ENCODE measurements at regions of chr15 and their contacts with region 1.

Region 1: DNA sequence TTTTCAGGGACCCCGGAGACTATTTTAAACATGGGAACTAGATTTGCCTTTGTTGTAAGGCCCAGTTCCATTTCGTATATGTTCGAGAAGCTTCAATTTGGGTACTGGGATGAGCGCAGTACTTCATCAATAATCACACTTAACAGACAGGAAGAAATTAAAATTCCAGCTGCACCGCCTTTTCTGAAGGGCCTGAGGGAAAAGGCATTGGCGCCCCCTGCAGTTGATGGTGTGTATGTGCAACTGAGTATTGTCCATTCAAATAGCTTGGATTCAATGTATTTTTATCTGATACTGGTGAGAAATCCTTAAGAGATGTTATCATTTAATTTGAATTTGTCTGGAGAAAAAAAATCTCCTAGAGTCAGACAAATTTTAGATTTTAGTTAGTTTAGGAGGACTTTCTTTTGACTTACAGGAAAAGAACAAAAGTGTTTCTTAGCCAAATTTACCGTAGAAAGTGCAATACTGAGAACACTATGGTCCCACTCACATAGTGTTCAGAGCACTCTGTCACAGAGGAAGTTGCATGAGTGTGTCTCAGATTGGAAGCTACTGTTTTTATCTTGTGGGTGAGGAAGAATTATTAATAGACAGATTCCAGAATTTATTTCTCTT is 5.4 kb upstream of the ALDH1A2 start:
- DNase-seq: no peak
- ATAC-seq: peak; percentile 48; the same call in 2 of the 3 replicates
- H3K4me3 ChIP-seq: no peak overlapping the region
- H3K27ac ChIP-seq: no peak overlapping the region
- H3K4me1 ChIP-seq: no peaks in the 10 kb centered on the region
- H3K27me3 ChIP-seq: peaks cover 2 to 5% of the 10 kb centered on the region in 2 experiments; a peak in 3 of 4 replicates
- CTCF ChIP-seq: peak; percentile 59 to 86 (median 80)
- EP300 ChIP-seq: no peak
- POLR2A ChIP-seq: no peak
- RAD21 ChIP-seq: peak; percentile 68

Region 2: DNA sequence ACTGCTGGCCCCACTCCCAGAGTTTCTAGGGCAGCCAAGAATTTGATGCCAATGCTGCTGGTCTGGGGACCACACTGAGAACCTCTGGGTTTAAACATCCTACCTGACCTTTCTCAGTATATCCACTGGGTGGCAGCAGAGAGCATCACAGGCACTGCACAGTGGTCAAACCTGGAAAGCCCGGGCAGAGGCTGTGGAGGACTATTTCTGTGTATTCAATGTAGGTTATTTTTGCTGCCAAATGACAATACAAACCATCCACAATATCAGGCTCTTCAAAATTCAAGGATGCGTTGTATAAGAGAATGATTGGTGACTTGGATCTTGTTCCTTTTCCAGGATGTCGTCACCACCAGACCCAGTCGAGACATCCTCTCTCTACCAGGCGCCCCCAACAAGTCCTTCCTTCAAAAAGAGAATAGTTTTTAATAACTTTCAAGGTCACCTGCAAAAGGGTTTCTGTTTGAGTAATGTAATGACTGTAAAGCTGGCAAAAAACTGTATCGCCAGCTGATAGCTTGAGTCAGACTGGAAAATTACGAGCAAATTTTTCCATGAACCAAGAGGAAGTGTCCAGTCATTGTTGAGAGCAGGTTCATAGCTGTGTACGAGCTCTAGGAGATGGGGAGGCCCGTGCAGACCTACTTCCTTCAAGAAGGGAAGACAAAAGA is 509.7 kb before region 1 on chr15:
- CTCF ChIA-PET with region 1: interaction called, 14 read pairs
- POLR2A ChIA-PET with region 1: no interaction called
- RAD21 ChIA-PET with region 1: no interaction called
- SMC1A ChIA-PET with region 1: no interaction called
- in situ Hi-C with region 1: no loop called
- intact Hi-C with region 1: loop called (anchors 10 kb)
- DNase-seq: peak; percentile 26
- ATAC-seq: peak; percentile 95
- H3K4me3 ChIP-seq: no peak overlapping the region
- H3K27ac ChIP-seq: no peak overlapping the region
- H3K4me1 ChIP-seq: peaks cover 3% of the 10 kb centered on the region; the same call in 1 of the 2 replicates
- H3K27me3 ChIP-seq: no peaks in the 10 kb centered on the region
- CTCF ChIP-seq: peak; percentile 82 to 86 (median 83)
- EP300 ChIP-seq: no peak
- POLR2A ChIP-seq: no peak
- RAD21 ChIP-seq: peak; percentile 66

Region 3: GRCh38 chr15:57743424-57743823 is 327.5 kb before region 1 on chr15:
- CTCF ChIA-PET with region 1: interaction called, 7 read pairs
- POLR2A ChIA-PET with region 1: no interaction called
- RAD21 ChIA-PET with region 1: interaction called, 9 read pairs
- SMC1A ChIA-PET with region 1: interaction called, 3 read pairs
- in situ Hi-C with region 1: no loop called
- intact Hi-C with region 1: loop called (anchors 10 kb)
- DNase-seq: no peak
- ATAC-seq: peak; percentile 43; the same call in 1 of the 3 replicates
- H3K4me3 ChIP-seq: no peak overlapping the region
- H3K27ac ChIP-seq: no peak overlapping the region
- H3K4me1 ChIP-seq: no peaks in the 10 kb centered on the region
- H3K27me3 ChIP-seq: no peaks in the 10 kb centered on the region; a peak in 1 of 4 replicates
- CTCF ChIP-seq: peak; percentile 6 to 32 (median 23); a peak in 3 of 6 replicates
- EP300 ChIP-seq: no peak
- POLR2A ChIP-seq: no peak
- RAD21 ChIP-seq: peak; percentile 8; the same call in 1 of the 2 replicates

Region 4: DNA sequence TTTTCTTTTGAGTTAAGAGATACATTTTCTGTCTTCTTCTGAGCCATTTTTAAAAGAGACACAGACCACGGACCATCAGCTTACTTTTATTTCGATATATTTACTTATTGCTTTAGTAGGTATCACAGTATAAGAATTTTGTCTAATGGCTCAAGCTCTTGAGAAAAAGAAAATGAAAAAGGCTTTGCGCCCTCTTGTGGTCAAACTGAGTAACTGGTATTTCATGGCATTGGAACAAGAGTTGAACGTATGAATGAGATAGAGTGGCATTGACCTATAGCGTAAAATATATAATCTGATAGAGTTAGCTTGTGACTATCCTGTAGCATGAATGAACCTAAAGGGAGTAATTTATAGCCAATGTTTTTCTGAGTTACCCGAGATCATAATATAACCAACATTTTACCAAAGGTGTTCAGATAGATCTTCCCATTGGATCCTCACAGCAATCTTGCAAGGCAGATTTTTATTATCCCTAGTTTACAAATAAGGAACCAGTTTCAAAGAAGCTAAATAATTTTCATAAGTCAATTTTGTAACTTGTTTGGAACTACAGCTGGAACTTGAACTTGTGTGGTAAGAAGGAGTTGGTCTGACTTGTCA is 209.8 kb before region 1 on chr15:
- CTCF ChIA-PET with region 1: interaction called, 27 read pairs
- POLR2A ChIA-PET with region 1: no interaction called
- RAD21 ChIA-PET with region 1: interaction called, 14 read pairs
- SMC1A ChIA-PET with region 1: interaction called, 6 read pairs
- in situ Hi-C with region 1: loop called (anchors 5 kb)
- intact Hi-C with region 1: loop called (anchors 1 kb)
- DNase-seq: peak; percentile 8
- ATAC-seq: peak; percentile 69
- H3K4me3 ChIP-seq: no peak overlapping the region
- H3K27ac ChIP-seq: no peak overlapping the region
- H3K4me1 ChIP-seq: no peaks in the 10 kb centered on the region
- H3K27me3 ChIP-seq: peaks cover 0 to 1% of the 10 kb centered on the region in 2 experiments; a peak in 1 of 4 replicates
- CTCF ChIP-seq: peak; percentile 63 to 75 (median 74)
- EP300 ChIP-seq: no peak
- POLR2A ChIP-seq: no peak
- RAD21 ChIP-seq: peak; percentile 59

Region 5: GRCh38 chr15:58043192-58043903 is 27.6 kb before region 1 on chr15:
- CTCF ChIA-PET with region 1: interaction called, 12 read pairs
- POLR2A ChIA-PET with region 1: no interaction called
- RAD21 ChIA-PET with region 1: interaction called, 3 read pairs
- SMC1A ChIA-PET with region 1: interaction called, 4 read pairs
- in situ Hi-C with region 1: no loop called
- intact Hi-C with region 1: no loop called
- DNase-seq: no peak
- ATAC-seq: peak; percentile 76
- H3K4me3 ChIP-seq: no peak overlapping the region
- H3K27ac ChIP-seq: no peak overlapping the region
- H3K4me1 ChIP-seq: no peaks in the 10 kb centered on the region
- H3K27me3 ChIP-seq: no peaks in the 10 kb centered on the region; a peak in 2 of 4 replicates
- CTCF ChIP-seq: peak; percentile 62 to 74 (median 68)
- EP300 ChIP-seq: no peak
- POLR2A ChIP-seq: no peak
- RAD21 ChIP-seq: peak; percentile 48

Region 6: DNA sequence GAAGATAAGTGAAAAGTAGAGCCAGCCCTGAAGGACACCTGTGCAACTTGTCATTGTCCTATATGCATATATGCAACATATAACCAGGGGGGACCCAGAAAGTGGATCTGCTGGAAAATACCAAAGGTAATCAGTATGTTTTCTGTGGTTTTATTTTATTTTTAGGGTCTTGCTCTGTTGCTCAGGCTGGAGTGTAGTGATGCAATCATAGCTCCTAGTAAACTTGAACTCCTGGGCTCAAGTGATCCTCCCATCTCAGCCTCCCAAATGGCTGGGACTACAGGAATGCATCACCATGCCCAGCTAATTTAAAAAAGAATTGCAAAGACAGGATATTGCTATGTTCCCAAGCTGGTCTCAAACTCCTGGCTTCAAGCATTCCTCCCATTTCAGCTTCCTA is 12.6 kb after region 1 on chr15:
- CTCF ChIA-PET with region 1: interaction called, 13 read pairs
- POLR2A ChIA-PET with region 1: no interaction called
- RAD21 ChIA-PET with region 1: interaction called, 4 read pairs
- SMC1A ChIA-PET with region 1: interaction called, 3 read pairs
- in situ Hi-C with region 1: no loop called
- intact Hi-C with region 1: no loop called
- DNase-seq: no peak
- ATAC-seq: no peak
- H3K4me3 ChIP-seq: no peak overlapping the region
- H3K27ac ChIP-seq: no peak overlapping the region
- H3K4me1 ChIP-seq: no peaks in the 10 kb centered on the region
- H3K27me3 ChIP-seq: peaks cover 0 to 1% of the 10 kb centered on the region in 2 experiments; a peak in 1 of 4 replicates
- CTCF ChIP-seq: no peak
- EP300 ChIP-seq: no peak
- POLR2A ChIP-seq: no peak
- RAD21 ChIP-seq: no peak

Region 7: GRCh38 chr15:58148633-58149445 is 77.9 kb after region 1 on chr15:
- CTCF ChIA-PET with region 1: no interaction called
- POLR2A ChIA-PET with region 1: no interaction called
- RAD21 ChIA-PET with region 1: no interaction called
- SMC1A ChIA-PET with region 1: no interaction called
- in situ Hi-C with region 1: no loop called
- intact Hi-C with region 1: no loop called
- DNase-seq: no peak
- ATAC-seq: no peak
- H3K4me3 ChIP-seq: no peak overlapping the region
- H3K27ac ChIP-seq: no peak overlapping the region
- H3K4me1 ChIP-seq: no peaks in the 10 kb centered on the region
- H3K27me3 ChIP-seq: no peaks in the 10 kb centered on the region
- CTCF ChIP-seq: no peak
- EP300 ChIP-seq: no peak
- POLR2A ChIP-seq: no peak
- RAD21 ChIP-seq: no peak

Measured in GM12878 (cell line).